Heart left ventricle (tissue), 16 donors: ENCODE measurements at regions of chr2 and their contacts with region 1.

Region 1: GRCh38 chr2:58928973-58929372 is 687.8 kb upstream of the FANCL start:
- DNase-seq: no peak
- ATAC-seq: peak; percentile 83 to 97 (median 92)
- H3K4me3 ChIP-seq: no peak overlapping the region
- H3K27ac ChIP-seq: no peak overlapping the region
- H3K4me1 ChIP-seq: no peaks in the 10 kb centered on the region
- H3K27me3 ChIP-seq: no peaks in the 10 kb centered on the region
- CTCF ChIP-seq: no peak
- POLR2A ChIP-seq: no peak

Region 2: DNA sequence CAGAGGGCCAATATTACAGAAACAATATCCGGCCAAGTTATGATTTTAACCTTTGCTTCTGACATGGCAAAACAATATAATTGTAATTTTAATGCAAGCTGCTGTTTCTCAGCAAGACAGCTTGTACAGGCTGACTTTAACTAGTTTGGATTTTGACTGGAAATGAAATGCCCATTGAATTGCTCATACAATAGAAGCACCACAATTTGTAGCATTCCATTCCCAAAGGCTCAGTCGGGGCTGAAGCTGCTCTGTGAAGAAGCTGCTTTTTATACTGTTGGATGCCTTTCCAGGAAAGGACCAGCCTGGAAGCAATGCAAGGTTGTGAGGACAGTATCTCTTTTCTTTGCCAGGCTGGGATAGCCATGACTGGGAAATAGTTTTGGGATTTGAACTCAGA is 10.8 kb before region 1 on chr2:
- intact Hi-C with region 1: no loop called
- DNase-seq: no peak
- ATAC-seq: no peak
- H3K4me3 ChIP-seq: no peak overlapping the region
- H3K27ac ChIP-seq: no peak overlapping the region
- H3K4me1 ChIP-seq: no peaks in the 10 kb centered on the region
- H3K27me3 ChIP-seq: no peaks in the 10 kb centered on the region
- CTCF ChIP-seq: no peak
- POLR2A ChIP-seq: no peak

Region 3: DNA sequence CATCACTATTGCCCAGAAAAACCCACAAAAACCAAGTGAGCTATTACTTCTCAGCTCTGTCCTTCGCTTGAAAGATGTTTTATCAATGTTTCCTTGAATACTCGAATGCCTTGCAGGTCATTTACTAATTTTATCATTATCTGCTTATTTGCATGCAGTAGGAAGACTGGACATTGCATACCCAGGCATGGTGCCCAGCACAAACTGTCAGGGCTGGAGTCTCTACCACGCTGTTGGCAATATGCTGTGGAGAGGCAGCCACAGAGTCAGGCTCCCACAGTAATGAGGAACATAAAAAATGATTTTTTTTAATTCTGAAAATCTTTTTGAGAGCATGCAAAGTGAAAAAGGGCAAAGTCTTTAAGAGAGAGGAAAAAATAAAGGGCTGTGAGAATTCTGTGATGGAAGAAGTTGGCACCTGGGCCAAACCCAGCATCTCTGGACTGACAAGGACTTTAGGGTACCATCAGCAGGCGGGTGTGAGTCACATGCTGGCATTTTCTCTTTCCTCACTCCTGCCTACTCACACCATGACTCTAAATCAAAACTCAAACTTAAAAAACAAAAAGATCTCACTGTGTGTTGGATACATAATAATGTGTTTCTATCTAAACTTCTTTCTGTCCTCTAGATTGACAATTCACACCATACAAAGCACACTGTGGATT is 22.0 kb after region 1 on chr2:
- intact Hi-C with region 1: loop called in 1 of 10 experiments (anchors 1 kb)
- DNase-seq: peak in 4 of 5 donors; percentile 50 to 68 (median 60)
- ATAC-seq: peak; percentile 94 to 97 (median 96)
- H3K4me3 ChIP-seq: no peak overlapping the region
- H3K27ac ChIP-seq: peak overlapping the region in 5 of 12 donors; percentile 13 to 65 (median 45)
- H3K4me1 ChIP-seq: peaks cover 0 to 17% (median 0%) of the 10 kb centered on the region in 12 donors
- H3K27me3 ChIP-seq: no peaks in the 10 kb centered on the region
- CTCF ChIP-seq: no peak
- POLR2A ChIP-seq: no peak